ENCODE measurements at regions of chr7 and their contacts with region 1.

Region 1: GRCh38 chr7:332646-333392 is 42.8 kb downstream of the FOXL3 start:
- DNase-seq: peak; percentile 90
- H3K4me3 ChIP-seq: peak overlapping the region; percentile 25
- H3K27ac ChIP-seq: peak overlapping the region; percentile 4
- H3K4me1 ChIP-seq: peaks cover 19% of the 10 kb centered on the region
- H3K27me3 ChIP-seq: no peaks in the 10 kb centered on the region
- CTCF ChIP-seq: peak; percentile 74

Region 2: DNA sequence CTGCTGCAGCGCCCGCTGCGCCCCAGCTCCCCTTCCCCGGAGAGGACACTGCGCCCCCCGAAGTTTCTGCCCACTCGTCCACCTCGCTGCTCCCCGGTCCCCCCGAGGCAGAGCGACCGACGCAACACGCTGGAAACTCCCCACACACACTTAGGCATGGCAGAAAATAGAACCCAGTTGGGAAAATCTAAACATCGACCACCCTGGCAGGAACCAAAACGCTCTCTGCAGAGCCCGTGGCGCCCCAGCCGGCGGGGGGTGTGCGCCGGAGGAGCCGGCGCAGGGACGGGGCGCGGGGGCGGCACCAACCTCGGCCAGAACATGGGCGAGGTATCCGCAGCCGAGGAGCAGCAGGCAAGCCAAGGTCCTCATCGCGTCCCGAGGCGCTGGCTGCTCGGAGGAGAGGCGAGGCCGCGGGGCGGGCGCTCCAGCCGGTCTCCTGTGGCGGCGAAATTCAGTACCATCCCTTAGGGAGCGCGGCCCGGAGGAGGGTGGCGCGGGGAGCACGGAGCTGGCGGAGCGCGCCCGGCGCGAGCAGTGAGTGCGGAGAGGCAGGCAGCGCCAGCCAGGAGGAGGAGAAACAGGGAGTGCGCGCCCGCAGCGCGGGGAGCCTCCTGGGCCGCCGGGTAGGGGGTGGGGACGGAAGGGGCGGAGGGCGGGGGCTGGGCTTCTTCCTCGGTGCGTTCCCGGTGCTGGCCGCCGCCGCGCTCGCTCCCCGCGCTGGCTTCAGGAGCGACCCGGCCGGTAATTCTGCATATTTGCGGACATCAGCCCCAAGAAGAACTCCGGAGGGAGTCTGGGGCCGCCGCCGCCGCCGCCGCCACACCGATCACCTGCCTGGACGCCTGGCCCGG is 186.0 kb after region 1 on chr7:
- intact Hi-C with region 1: loop called (anchors 5 kb)
- DNase-seq: peak; percentile 89
- H3K4me3 ChIP-seq: peak overlapping the region; percentile 78
- H3K27ac ChIP-seq: peak overlapping the region; percentile 97
- H3K4me1 ChIP-seq: peaks cover 24% of the 10 kb centered on the region
- H3K27me3 ChIP-seq: peaks cover 29% of the 10 kb centered on the region
- CTCF ChIP-seq: no peak

Region 3: GRCh38 chr7:636396-636795 is 303.6 kb after region 1 on chr7:
- intact Hi-C with region 1: loop called (anchors 10 kb)
- DNase-seq: no peak
- H3K4me3 ChIP-seq: no peak overlapping the region
- H3K27ac ChIP-seq: no peak overlapping the region
- H3K4me1 ChIP-seq: no peaks in the 10 kb centered on the region
- H3K27me3 ChIP-seq: no peaks in the 10 kb centered on the region
- CTCF ChIP-seq: no peak

Region 4: GRCh38 chr7:774161-775109 is 441.6 kb after region 1 on chr7:
- intact Hi-C with region 1: loop called (anchors 5 kb)
- DNase-seq: peak; percentile 69
- H3K4me3 ChIP-seq: no peak overlapping the region
- H3K27ac ChIP-seq: no peak overlapping the region
- H3K4me1 ChIP-seq: peaks cover 5% of the 10 kb centered on the region
- H3K27me3 ChIP-seq: no peaks in the 10 kb centered on the region
- CTCF ChIP-seq: peak; percentile 94